ENCODE measurements at regions of chr2 and their contacts with region 1.

Region 1: GRCh38 chr2:29923110-29923721 is 1.8 kb upstream of the ALK start:
- H3K4me3 Mint-ChIP-seq: no peak overlapping the region
- H3K27ac Mint-ChIP-seq: no peak overlapping the region
- H3K4me1 Mint-ChIP-seq: peaks cover 15% of the 10 kb centered on the region
- H3K27me3 Mint-ChIP-seq: peaks cover 44% of the 10 kb centered on the region

Region 2: GRCh38 chr2:29295857-29296256 is 627.4 kb before region 1 on chr2:
- intact Hi-C with region 1: loop called (anchors 5 kb)
- H3K4me3 Mint-ChIP-seq: no peak overlapping the region
- H3K27ac Mint-ChIP-seq: no peak overlapping the region
- H3K4me1 Mint-ChIP-seq: no peaks in the 10 kb centered on the region
- H3K27me3 Mint-ChIP-seq: peaks cover 21% of the 10 kb centered on the region

Region 3: DNA sequence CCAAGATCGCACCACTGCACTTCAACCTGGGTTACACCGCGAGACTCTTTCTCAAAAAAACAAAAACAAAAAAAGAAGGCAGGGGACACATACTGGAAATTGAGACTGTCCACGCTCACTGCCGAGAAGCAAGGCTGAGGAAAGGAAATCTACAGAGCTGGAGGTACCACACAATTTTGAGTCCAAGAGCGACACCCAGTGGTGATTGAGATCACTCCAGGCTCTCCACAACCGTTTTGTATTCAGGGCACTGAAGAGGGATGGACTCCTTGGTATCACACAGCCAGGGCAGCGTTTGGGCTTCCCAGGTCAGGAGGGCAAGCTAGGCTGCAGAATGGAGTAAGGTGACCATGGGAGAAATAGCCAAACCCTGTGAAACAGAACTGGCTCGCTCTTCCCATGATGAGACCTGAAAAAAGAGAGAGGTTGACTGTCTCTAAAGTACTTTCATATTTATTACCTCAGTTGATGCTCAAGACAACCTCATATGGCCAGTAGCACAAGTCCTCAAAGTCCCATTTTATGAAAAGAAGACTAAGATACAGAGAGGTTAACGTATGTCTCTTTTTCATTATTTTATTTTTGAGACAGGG is 149.1 kb after region 1 on chr2:
- intact Hi-C with region 1: loop called (anchors 1 kb)
- H3K4me3 Mint-ChIP-seq: no peak overlapping the region
- H3K27ac Mint-ChIP-seq: no peak overlapping the region
- H3K4me1 Mint-ChIP-seq: no peaks in the 10 kb centered on the region
- H3K27me3 Mint-ChIP-seq: peaks cover 24% of the 10 kb centered on the region